Activated naive CD4-positive, alpha-beta T cell treated with anti-CD3 and anti-CD28 coated beads for 36 hours (primary cell): ENCODE measurements at regions of chr2 and their contacts with region 1.

Region 1: DNA sequence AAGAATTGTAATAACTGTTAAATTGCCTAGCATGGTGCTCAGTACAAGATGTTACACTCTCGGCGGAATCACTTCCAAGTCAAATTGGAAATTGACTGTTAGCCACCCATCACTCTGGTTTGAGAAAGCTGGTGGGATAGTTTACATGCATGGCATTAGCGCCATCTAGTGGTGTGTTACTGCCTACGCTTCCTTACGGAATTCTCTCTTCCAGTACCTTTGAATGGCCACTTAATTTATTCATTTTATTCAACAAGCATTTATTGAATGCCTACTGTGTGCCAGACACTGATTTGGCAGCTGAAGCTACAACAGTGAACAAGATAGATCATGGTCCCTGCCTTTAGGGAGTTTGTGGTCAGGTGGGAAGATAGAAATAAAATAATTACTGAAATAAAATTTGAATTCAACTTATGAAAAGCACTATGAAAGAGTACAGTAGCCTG is 171.2 kb downstream of the TMEM247 start:
- DNase-seq: peak; percentile 82
- H3K4me3 Mint-ChIP-seq: no peak overlapping the region
- H3K27ac Mint-ChIP-seq: no peak overlapping the region
- H3K4me1 Mint-ChIP-seq: no peaks in the 10 kb centered on the region
- H3K27me3 Mint-ChIP-seq: no peaks in the 10 kb centered on the region

Region 2: GRCh38 chr2:46010925-46011490 is 639.6 kb before region 1 on chr2:
- CTCF ChIA-PET with region 1: no interaction called
- intact Hi-C with region 1: loop called (anchors 5 kb)
- DNase-seq: no peak
- H3K4me3 Mint-ChIP-seq: no peak overlapping the region
- H3K27ac Mint-ChIP-seq: no peak overlapping the region
- H3K4me1 Mint-ChIP-seq: no peaks in the 10 kb centered on the region
- H3K27me3 Mint-ChIP-seq: no peaks in the 10 kb centered on the region

Region 3: GRCh38 chr2:46241344-46241743 is 409.2 kb before region 1 on chr2:
- CTCF ChIA-PET with region 1: no interaction called
- intact Hi-C with region 1: no loop called
- DNase-seq: no peak
- H3K4me3 Mint-ChIP-seq: no peak overlapping the region
- H3K27ac Mint-ChIP-seq: no peak overlapping the region
- H3K4me1 Mint-ChIP-seq: peaks cover 33% of the 10 kb centered on the region
- H3K27me3 Mint-ChIP-seq: no peaks in the 10 kb centered on the region

Region 4: DNA sequence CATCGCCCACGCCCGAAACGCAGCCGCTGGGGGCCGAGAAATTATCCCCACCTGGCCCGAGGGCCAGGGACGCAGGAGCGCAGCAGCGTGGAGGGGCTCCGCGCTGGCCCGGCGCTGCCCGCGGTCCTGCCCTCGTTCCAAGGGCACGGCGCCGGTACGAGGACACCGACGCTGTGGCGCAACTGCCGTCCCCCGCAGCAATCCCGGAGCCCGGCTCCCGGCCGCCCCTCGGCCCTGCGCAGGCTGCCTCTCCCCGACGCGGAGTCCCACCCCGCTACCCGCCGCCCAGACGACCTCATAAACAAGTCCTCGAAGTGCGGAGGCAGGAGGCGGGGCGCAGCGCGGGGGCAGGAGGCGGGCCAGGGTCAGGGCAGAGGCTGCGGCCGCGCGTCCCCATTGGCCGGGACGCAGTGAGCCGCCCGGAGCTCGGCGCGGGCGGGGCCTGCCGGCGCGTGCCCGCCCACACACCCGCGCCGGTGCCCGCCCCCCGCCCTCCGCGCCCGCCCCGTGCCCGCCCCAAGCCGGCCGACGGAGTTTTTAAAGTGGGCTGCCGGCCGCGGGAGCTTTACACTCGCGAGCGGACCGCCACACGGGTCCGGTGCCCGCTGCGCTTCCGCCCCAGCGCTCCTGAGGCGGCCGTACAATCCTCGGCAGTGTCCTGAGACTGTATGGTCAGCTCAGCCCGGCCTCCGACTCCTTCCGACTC is 353.6 kb before region 1 on chr2 and contains the start of gene EPAS1:
- CTCF ChIA-PET with region 1: no interaction called
- intact Hi-C with region 1: loop called (anchors 10 kb)
- DNase-seq: peak; percentile 84
- H3K4me3 Mint-ChIP-seq: peak within 1 kb of the TSS; percentile 80
- H3K27ac Mint-ChIP-seq: no peak within 1 kb of the TSS
- H3K4me1 Mint-ChIP-seq: peaks cover 15% of the 10 kb centered on the region
- H3K27me3 Mint-ChIP-seq: peaks cover 47% of the 10 kb centered on the region
- total RNA-seq, gene EPAS1: 2.1 to 2.9 TPM

Region 5: DNA sequence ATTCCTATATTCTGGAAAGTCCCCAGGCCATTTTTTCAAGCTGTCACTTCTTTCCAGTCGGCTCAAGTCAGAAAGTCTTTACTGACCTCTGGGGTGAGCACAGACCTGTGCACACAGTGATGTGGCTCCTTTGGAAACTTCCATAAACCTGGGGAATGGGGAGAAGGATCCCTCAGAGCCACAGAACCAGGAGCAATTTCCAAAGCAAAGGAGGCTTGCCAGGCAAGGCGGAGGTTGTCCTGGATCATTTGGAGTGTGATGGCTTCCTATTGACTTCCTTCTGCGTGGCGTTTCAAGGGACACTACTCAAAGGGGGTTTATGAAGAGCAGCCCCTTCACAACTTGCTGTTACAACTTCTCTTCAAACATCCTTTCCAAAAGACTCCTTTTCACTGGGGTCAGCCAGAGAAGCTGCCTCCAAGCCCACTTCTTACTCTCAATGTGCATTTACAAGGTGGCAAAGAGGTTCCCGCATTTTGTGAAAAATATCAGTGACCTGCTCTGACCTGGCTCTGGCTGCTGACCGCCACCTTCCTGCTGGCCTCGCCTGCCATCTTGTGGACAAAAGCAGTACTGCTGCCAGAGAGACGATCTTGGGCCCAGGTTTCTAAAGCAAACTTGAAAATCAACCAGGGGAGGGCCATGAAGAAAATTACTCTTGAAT is 189.4 kb before region 1 on chr2:
- CTCF ChIA-PET with region 1: interaction called, 12 read pairs
- intact Hi-C with region 1: no loop called
- DNase-seq: peak; percentile 80
- H3K4me3 Mint-ChIP-seq: no peak overlapping the region
- H3K27ac Mint-ChIP-seq: no peak overlapping the region
- H3K4me1 Mint-ChIP-seq: no peaks in the 10 kb centered on the region
- H3K27me3 Mint-ChIP-seq: no peaks in the 10 kb centered on the region

Region 6: GRCh38 chr2:46632349-46632748 is 18.2 kb before region 1 on chr2:
- CTCF ChIA-PET with region 1: interaction called, 10 read pairs
- intact Hi-C with region 1: loop called (anchors 1 kb)
- DNase-seq: no peak
- H3K4me3 Mint-ChIP-seq: no peak overlapping the region
- H3K27ac Mint-ChIP-seq: no peak overlapping the region
- H3K4me1 Mint-ChIP-seq: peaks cover 9% of the 10 kb centered on the region
- H3K27me3 Mint-ChIP-seq: no peaks in the 10 kb centered on the region

Region 7: GRCh38 chr2:46666044-46666679 is 15.6 kb after region 1 on chr2:
- CTCF ChIA-PET with region 1: no interaction called
- intact Hi-C with region 1: no loop called
- DNase-seq: no peak
- H3K4me3 Mint-ChIP-seq: no peak overlapping the region
- H3K27ac Mint-ChIP-seq: no peak overlapping the region
- H3K4me1 Mint-ChIP-seq: no peaks in the 10 kb centered on the region
- H3K27me3 Mint-ChIP-seq: peaks cover 22% of the 10 kb centered on the region

Region 8: DNA sequence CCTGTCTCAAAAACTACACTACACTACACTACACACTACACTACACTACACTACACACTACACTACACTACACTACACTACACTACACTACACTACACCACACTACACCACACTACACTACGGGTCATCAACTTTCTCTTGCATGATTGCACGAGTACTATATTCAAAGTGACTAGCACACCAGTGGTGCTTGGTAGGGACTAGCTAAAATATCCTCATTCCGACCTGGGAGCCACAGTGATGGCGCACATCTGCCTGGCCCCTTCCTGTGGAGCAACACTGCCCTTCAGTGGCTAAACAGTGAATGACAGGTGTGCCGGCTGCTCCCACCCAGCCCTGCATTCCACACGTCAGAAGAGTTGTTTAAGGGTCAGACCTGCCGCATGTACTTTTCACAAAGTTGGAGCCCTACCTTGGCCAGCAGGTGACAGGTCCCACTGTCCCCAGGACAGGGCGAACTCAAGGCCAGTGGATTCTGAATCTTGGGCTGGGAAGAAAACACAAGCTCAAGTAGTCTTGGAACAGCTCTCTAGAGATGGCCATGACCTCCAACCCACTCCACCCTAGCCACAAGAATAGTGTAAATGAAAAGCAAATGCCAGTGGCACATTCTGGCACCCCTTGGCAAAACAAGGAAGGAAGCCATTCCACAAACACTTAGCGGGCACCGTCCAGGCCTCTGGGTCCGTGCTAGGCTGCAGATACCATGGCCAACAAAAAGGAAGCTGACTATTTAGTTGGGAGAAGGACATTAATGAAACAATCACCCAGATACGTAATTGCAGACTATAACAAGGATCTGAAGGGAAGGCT is 672.6 kb after region 1 on chr2:
- CTCF ChIA-PET with region 1: no interaction called
- intact Hi-C with region 1: loop called (anchors 10 kb)
- DNase-seq: peak; percentile 79
- H3K4me3 Mint-ChIP-seq: no peak overlapping the region
- H3K27ac Mint-ChIP-seq: no peak overlapping the region
- H3K4me1 Mint-ChIP-seq: no peaks in the 10 kb centered on the region
- H3K27me3 Mint-ChIP-seq: peaks cover 1% of the 10 kb centered on the region